CD4-positive, alpha-beta T cell (primary cell): ENCODE measurements at regions of chr10 and their contacts with region 1.

Region 1: DNA sequence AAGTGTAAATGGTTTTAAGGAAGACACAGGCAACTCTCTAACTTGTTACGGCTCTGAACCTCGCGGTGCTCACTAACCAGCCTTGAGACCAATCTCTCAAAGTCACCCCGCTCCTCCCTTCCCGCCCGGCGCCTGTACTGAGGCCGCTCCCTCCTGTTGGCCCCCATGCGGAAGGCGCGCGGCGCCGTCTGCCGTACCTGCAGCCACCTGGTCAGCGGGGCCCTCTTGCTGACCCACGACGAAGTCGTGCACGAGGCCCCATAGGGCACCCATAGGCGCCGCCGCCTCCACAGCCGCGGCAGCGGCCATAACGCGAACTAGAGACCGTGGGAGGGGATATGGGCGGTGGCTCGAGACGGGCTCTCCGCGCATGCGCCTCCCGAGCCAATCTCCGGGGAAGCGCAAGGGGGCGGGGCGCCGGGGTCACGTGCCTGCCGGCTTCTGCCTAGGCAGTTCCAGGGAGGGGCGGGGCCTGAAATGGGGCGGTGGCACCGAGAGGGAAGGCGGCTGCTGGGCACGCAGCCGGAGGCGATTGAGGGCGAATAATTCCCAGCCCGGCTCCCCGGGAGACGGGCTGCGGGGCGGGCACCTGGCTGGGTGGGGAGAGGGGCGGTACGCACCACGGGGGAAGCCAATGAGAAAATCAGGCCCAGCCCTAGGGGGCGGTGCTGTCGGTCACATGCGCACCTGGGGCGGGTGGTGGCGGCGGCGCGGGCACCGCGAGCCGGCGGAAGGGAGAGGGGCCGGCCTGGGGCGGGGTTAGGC is at the start of gene MMS19:
- DNase-seq: peak; percentile 98 to 100 (median 99)
- ATAC-seq: peak; percentile 72
- H3K4me3 ChIP-seq: peak within 1 kb of the TSS; percentile 91
- H3K4me3 Mint-ChIP-seq: peak within 1 kb of the TSS; percentile 99
- H3K27ac ChIP-seq: peak within 1 kb of the TSS; percentile 75 to 83
- H3K27ac Mint-ChIP-seq: peak within 1 kb of the TSS; percentile 91
- H3K4me1 ChIP-seq: peaks cover 42% of the 10 kb centered on the region
- H3K4me1 Mint-ChIP-seq: peaks cover 52% of the 10 kb centered on the region
- H3K27me3 ChIP-seq: peaks cover 0 to 2% of the 10 kb centered on the region in 2 experiments
- H3K27me3 Mint-ChIP-seq: peaks cover 15% of the 10 kb centered on the region
- CTCF ChIP-seq: no peak
- total RNA-seq, gene MMS19: 58.4 to 65.7 TPM

Region 2: GRCh38 chr10:96610817-96611216 is 887.4 kb before region 1 on chr10:
- CTCF ChIA-PET with region 1: no interaction called
- POLR2A ChIA-PET with region 1: no interaction called
- intact Hi-C with region 1: no loop called
- DNase-seq: peak in 1 of 14 experiments; percentile 39
- ATAC-seq: no peak
- H3K4me3 ChIP-seq: no peak overlapping the region
- H3K4me3 Mint-ChIP-seq: no peak overlapping the region
- H3K27ac ChIP-seq: no peak overlapping the region
- H3K27ac Mint-ChIP-seq: no peak overlapping the region
- H3K4me1 ChIP-seq: peaks cover 14% of the 10 kb centered on the region
- H3K4me1 Mint-ChIP-seq: peaks cover 5% of the 10 kb centered on the region
- H3K27me3 ChIP-seq: no peaks in the 10 kb centered on the region
- H3K27me3 Mint-ChIP-seq: no peaks in the 10 kb centered on the region
- CTCF ChIP-seq: no peak

Region 3: DNA sequence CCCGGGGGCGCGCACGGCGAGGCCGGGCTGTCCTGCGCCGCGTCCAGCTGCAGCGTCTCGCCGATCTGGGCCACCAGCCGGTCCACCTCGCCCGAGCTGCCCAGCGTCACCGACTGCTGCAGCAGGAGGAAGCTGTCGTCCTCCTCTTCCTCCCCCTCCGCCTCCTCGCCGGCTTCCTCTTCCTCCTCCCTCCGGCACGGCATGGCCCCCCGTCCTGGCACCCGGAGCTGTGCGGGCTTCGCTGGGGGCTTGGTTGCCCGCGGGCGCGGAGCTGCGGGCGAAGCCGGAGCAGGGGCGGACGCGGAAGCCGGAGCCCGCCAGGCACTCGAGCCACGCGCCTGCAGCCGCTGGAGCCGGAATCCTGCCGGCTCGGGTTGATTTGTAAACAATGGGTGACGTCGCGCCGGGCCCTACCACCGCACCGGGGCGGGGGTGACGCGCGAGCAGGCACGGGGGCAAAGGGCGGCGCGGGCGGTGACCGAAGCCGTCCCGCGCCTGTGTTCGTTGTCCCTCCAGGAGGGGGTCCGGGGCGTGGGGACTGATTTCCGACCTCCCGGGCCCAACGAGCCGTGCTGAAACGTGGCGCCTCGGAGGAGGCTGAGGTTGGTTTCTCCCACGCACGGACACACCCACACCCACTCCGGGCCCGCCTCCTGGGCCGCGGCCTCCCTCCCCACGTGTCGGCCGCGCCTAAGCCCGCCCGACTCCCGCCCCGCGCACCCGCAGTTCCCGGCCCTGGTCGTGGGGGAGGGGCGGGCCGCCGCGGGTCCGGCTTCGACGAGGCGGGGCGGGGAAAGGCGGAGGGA is 163.7 kb before region 1 on chr10 and contains the start of gene FRAT2:
- CTCF ChIA-PET with region 1: no interaction called
- POLR2A ChIA-PET with region 1: no interaction called
- intact Hi-C with region 1: loop called in 1 of 2 experiments (anchors 5 kb)
- DNase-seq: peak; percentile 78 to 95 (median 85)
- ATAC-seq: peak; percentile 88
- H3K4me3 ChIP-seq: peak within 1 kb of the TSS; percentile 76
- H3K4me3 Mint-ChIP-seq: peak within 1 kb of the TSS; percentile 96
- H3K27ac ChIP-seq: peak within 1 kb of the TSS; percentile 97
- H3K27ac Mint-ChIP-seq: peak within 1 kb of the TSS; percentile 91
- H3K4me1 ChIP-seq: peaks cover 43% of the 10 kb centered on the region
- H3K4me1 Mint-ChIP-seq: peaks cover 50% of the 10 kb centered on the region
- H3K27me3 ChIP-seq: no peaks in the 10 kb centered on the region
- H3K27me3 Mint-ChIP-seq: peaks cover 3% of the 10 kb centered on the region
- CTCF ChIP-seq: no peak
- total RNA-seq, gene FRAT2: 27.0 to 27.6 TPM

Region 4: GRCh38 chr10:97445722-97446639 is 52.3 kb before region 1 on chr10 and contains the starts of genes EXOSC1 and ZDHHC16:
- CTCF ChIA-PET with region 1: no interaction called
- POLR2A ChIA-PET with region 1: no interaction called
- intact Hi-C with region 1: loop called in 1 of 2 experiments (anchors 2 kb)
- DNase-seq: peak; percentile 73 to 95 (median 86)
- ATAC-seq: peak; percentile 97
- H3K4me3 ChIP-seq: peak within 1 kb of the TSS; percentile 78
- H3K4me3 Mint-ChIP-seq: peak within 1 kb of the TSS; percentile 100
- H3K27ac ChIP-seq: peak within 1 kb of the TSS; percentile 57 to 73
- H3K27ac Mint-ChIP-seq: peak within 1 kb of the TSS; percentile 95
- H3K4me1 ChIP-seq: peaks cover 33% of the 10 kb centered on the region
- H3K4me1 Mint-ChIP-seq: peaks cover 53% of the 10 kb centered on the region
- H3K27me3 ChIP-seq: no peaks in the 10 kb centered on the region
- H3K27me3 Mint-ChIP-seq: no peaks in the 10 kb centered on the region
- CTCF ChIP-seq: no peak
- total RNA-seq, gene EXOSC1: 28.8 to 29.7 TPM
- total RNA-seq, gene ZDHHC16: 6.2 to 6.5 TPM

Region 5: GRCh38 chr10:97518301-97519043 is 20.2 kb after region 1 on chr10:
- CTCF ChIA-PET with region 1: no interaction called
- POLR2A ChIA-PET with region 1: no interaction called
- intact Hi-C with region 1: no loop called
- DNase-seq: no peak
- ATAC-seq: no peak
- H3K4me3 ChIP-seq: no peak overlapping the region
- H3K4me3 Mint-ChIP-seq: no peak overlapping the region
- H3K27ac ChIP-seq: no peak overlapping the region
- H3K27ac Mint-ChIP-seq: no peak overlapping the region
- H3K4me1 ChIP-seq: no peaks in the 10 kb centered on the region
- H3K4me1 Mint-ChIP-seq: no peaks in the 10 kb centered on the region
- H3K27me3 ChIP-seq: peaks cover 0 to 7% of the 10 kb centered on the region in 2 experiments
- H3K27me3 Mint-ChIP-seq: peaks cover 10% of the 10 kb centered on the region
- CTCF ChIP-seq: no peak

Region 6: GRCh38 chr10:97571604-97572003 is 73.3 kb after region 1 on chr10:
- CTCF ChIA-PET with region 1: no interaction called
- POLR2A ChIA-PET with region 1: no interaction called
- intact Hi-C with region 1: no loop called
- DNase-seq: no peak
- ATAC-seq: no peak
- H3K4me3 ChIP-seq: no peak overlapping the region
- H3K4me3 Mint-ChIP-seq: no peak overlapping the region
- H3K27ac ChIP-seq: no peak overlapping the region
- H3K27ac Mint-ChIP-seq: no peak overlapping the region
- H3K4me1 ChIP-seq: no peaks in the 10 kb centered on the region
- H3K4me1 Mint-ChIP-seq: no peaks in the 10 kb centered on the region
- H3K27me3 ChIP-seq: no peaks in the 10 kb centered on the region
- H3K27me3 Mint-ChIP-seq: no peaks in the 10 kb centered on the region
- CTCF ChIP-seq: no peak

Region 7: DNA sequence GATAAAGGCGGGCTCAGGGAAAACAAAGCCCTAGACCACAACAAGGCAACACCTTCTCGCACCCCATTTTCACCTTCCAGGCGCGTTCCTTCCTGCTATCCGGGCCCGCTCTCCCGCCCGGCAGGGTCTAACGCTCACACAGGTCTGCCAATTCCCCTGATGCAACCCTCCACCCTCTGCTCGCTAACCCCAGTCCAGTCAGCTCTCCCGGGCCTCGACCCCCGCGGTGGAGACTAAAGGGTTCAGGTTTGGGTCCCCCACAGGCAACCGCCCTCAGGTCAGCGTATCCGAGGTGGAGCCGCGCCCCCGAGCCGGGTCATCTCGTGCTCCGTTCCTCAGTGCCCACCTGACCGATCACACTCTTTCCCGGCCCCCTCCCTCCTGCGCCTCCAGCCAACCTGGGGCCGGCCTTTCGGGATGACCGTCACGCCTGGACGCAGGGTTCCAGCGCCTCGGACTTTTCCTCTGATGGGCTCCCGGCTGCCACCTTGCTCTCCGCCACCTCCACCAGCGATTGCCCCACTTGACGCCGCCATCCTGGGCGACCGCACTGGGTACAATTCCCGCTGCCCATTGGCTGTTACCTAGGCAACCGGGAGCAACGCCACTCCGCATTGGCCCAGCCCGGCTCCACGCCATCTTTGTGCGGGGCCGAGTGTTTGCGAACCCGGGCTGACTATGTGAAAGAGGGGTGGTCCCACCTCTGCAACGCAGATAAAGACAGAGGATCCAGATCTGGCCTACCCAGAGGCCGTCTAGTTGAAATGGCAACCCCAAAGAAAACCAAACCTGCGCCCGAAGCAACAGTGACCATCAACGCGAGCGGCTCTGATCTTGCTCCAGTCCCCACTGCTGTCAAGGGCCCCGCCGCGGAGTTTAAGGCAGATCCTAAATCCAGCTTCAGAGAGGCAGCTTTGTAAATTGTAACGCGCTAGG is 135.0 kb after region 1 on chr10 and contains the start of gene MORN4:
- CTCF ChIA-PET with region 1: no interaction called
- POLR2A ChIA-PET with region 1: no interaction called
- intact Hi-C with region 1: loop called (anchors 2 kb)
- DNase-seq: peak; percentile 85 to 95 (median 89)
- ATAC-seq: peak; percentile 99
- H3K4me3 ChIP-seq: peak within 1 kb of the TSS; percentile 98
- H3K4me3 Mint-ChIP-seq: peak within 1 kb of the TSS; percentile 94
- H3K27ac ChIP-seq: no peak within 1 kb of the TSS
- H3K27ac Mint-ChIP-seq: peak within 1 kb of the TSS; percentile 71
- H3K4me1 ChIP-seq: peaks cover 18% of the 10 kb centered on the region
- H3K4me1 Mint-ChIP-seq: peaks cover 16% of the 10 kb centered on the region
- H3K27me3 ChIP-seq: no peaks in the 10 kb centered on the region
- H3K27me3 Mint-ChIP-seq: no peaks in the 10 kb centered on the region
- CTCF ChIP-seq: no peak
- total RNA-seq, gene MORN4: 0.36 to 0.39 TPM

Region 8: GRCh38 chr10:97736902-97737769 is 238.9 kb after region 1 on chr10 and contains the start of gene ZFYVE27:
- CTCF ChIA-PET with region 1: no interaction called
- POLR2A ChIA-PET with region 1: interaction called, 3 read pairs
- intact Hi-C with region 1: loop called in 1 of 2 experiments (anchors 5 kb)
- DNase-seq: peak; percentile 91 to 98 (median 94)
- ATAC-seq: peak; percentile 90
- H3K4me3 ChIP-seq: peak within 1 kb of the TSS; percentile 80
- H3K4me3 Mint-ChIP-seq: peak within 1 kb of the TSS; percentile 97
- H3K27ac ChIP-seq: peak within 1 kb of the TSS; percentile 85 to 92
- H3K27ac Mint-ChIP-seq: peak within 1 kb of the TSS; percentile 92
- H3K4me1 ChIP-seq: peaks cover 37% of the 10 kb centered on the region
- H3K4me1 Mint-ChIP-seq: peaks cover 57% of the 10 kb centered on the region
- H3K27me3 ChIP-seq: no peaks in the 10 kb centered on the region
- H3K27me3 Mint-ChIP-seq: no peaks in the 10 kb centered on the region
- CTCF ChIP-seq: no peak
- total RNA-seq, gene ZFYVE27: 58.4 to 60.6 TPM

Region 9: DNA sequence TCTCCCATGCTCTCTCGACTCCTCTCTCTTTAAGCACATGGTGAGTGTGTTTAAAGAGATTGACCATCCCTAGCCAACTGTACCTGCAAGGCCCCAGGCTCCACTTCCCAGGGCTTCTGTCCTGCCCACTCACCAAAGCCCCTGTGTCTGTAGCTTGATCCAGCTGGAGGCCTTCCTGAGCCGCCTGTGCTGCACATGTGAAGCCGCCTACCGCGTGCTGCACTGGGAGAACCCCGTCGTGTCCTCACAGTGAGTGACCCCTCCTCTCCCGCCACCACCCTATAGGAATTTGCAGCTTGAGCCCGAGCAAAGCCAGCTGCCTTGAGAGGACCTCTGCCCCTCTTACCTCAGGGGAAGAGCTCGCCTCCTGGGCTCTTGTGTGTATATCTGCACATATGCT is 249.9 kb after region 1 on chr10:
- CTCF ChIA-PET with region 1: no interaction called
- POLR2A ChIA-PET with region 1: no interaction called
- intact Hi-C with region 1: no loop called
- DNase-seq: no peak
- ATAC-seq: no peak
- H3K4me3 ChIP-seq: no peak overlapping the region
- H3K4me3 Mint-ChIP-seq: no peak overlapping the region
- H3K27ac ChIP-seq: no peak overlapping the region
- H3K27ac Mint-ChIP-seq: no peak overlapping the region
- H3K4me1 ChIP-seq: no peaks in the 10 kb centered on the region
- H3K4me1 Mint-ChIP-seq: peaks cover 9% of the 10 kb centered on the region
- H3K27me3 ChIP-seq: no peaks in the 10 kb centered on the region
- H3K27me3 Mint-ChIP-seq: no peaks in the 10 kb centered on the region
- CTCF ChIP-seq: no peak